Stomach (tissue), 19 donors: ENCODE measurements at regions of chr9 and their contacts with region 1.

Region 1: GRCh38 chr9:93566408-93567270 is 9.7 kb upstream of the PHF2 start:
- DNase-seq: peak; percentile 99
- H3K4me3 ChIP-seq: peak overlapping the region; percentile 46 to 60 (median 50)
- H3K27ac ChIP-seq: peak overlapping the region; percentile 92 to 98 (median 94)
- H3K4me1 ChIP-seq: peaks cover 9 to 17% (median 13%) of the 10 kb centered on the region in 4 donors
- H3K27me3 ChIP-seq: no peaks in the 10 kb centered on the region
- CTCF ChIP-seq: peak in 5 of 7 experiments; percentile 89 to 96 (median 92)
- EP300 ChIP-seq: no peak
- POLR2A ChIP-seq: peak in 2 of 4 donors; percentile 60 to 82

Region 2: DNA sequence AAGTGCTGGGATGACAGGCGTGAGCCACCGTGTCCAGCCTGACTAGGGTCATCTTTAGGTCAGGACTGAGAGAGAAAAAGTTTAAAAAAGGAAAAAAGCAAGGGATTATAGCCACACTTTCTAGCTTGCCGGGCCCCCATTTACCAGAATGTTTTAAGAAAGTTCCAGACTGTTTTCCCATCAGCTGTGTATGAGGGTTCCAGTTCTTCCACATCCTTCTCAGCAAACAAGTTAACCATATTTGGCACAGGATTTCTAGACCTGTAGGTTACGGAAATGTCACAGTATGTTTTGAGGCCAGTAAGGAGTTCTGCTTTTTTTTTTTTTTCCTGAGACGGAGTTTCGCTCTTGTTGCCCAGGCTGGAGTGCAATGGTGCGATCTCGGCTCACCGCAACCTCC is 122.3 kb before region 1 on chr9:
- intact Hi-C with region 1: loop called (anchors 10 kb)
- DNase-seq: no peak
- H3K4me3 ChIP-seq: no peak overlapping the region
- H3K27ac ChIP-seq: no peak overlapping the region
- H3K4me1 ChIP-seq: peaks cover under 1 to 7% (median 3%) of the 10 kb centered on the region in 4 donors
- H3K27me3 ChIP-seq: no peaks in the 10 kb centered on the region
- CTCF ChIP-seq: no peak
- EP300 ChIP-seq: no peak
- POLR2A ChIP-seq: no peak